Mammary epithelial cell (primary cell): ENCODE measurements at regions of chr3 and their contacts with region 1.

Region 1: DNA sequence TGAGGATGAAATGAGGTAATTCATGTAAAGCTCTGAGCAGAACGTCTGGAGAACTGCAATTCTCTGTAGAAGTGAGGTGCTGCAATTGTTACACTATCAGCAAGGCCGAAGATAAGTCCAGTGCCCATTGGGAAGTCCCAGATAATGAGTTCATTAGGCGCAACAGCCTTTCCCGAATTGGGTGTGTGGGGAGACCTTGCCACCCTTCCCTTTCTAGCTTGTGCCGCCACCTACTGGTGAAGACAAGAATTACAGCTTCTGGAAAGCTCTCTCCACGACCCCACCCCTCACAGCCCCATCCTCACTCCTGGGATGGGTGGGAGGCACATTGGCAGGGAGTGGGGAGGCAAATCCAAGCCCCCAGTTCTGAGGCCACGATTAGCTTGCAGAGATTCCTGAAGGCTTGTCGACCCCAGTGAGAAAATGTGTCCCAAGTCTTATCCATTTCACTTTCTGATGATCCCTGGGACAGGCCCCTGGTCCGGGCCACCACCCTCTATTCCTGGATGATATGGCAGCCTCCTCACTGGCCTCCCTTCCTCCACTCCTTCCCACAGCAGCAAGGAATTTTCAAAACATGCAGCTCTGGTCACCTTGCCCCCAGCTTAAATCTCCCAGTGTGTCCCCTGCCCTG is 36.4 kb downstream of the FAM3D start:
- DNase-seq: peak; percentile 43
- H3K4me3 ChIP-seq: no peak overlapping the region
- H3K27ac ChIP-seq: no peak overlapping the region
- H3K4me1 ChIP-seq: no peaks in the 10 kb centered on the region
- H3K27me3 ChIP-seq: peaks cover 2% of the 10 kb centered on the region
- CTCF ChIP-seq: peak; percentile 76 to 93

Region 2: DNA sequence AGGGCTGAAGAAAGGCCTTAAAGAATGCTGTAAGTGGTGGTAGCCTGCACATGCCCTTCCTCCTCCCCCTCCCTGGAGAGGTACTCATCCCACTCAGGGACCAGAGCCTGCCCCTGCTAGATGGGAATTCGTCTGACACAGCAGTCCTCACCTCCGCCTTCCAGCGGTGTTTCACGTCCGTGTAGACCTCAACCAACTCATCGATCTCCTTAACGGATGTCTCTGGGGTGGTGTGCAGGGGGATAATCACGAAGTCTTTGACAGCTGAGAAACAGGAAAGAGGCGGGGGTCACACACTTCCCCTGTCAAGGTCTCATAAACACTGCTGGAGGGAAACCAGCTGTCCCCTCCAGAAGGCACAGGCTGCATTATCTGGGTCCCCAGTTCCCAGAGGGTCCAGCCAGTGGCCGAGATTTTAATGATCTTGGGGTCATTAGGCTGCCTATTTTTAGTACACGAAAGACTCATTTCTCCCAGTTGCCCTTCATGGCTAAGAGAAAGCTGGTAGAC is 429.3 kb before region 1 on chr3:
- CTCF ChIA-PET with region 1: no interaction called
- dilution Hi-C with region 1: loop called (anchors 10 kb)
- in situ Hi-C with region 1: no loop called
- intact Hi-C with region 1: no loop called
- DNase-seq: no peak
- H3K4me3 ChIP-seq: no peak overlapping the region
- H3K27ac ChIP-seq: no peak overlapping the region
- H3K4me1 ChIP-seq: no peaks in the 10 kb centered on the region
- H3K27me3 ChIP-seq: no peaks in the 10 kb centered on the region
- CTCF ChIP-seq: no peak

Region 3: DNA sequence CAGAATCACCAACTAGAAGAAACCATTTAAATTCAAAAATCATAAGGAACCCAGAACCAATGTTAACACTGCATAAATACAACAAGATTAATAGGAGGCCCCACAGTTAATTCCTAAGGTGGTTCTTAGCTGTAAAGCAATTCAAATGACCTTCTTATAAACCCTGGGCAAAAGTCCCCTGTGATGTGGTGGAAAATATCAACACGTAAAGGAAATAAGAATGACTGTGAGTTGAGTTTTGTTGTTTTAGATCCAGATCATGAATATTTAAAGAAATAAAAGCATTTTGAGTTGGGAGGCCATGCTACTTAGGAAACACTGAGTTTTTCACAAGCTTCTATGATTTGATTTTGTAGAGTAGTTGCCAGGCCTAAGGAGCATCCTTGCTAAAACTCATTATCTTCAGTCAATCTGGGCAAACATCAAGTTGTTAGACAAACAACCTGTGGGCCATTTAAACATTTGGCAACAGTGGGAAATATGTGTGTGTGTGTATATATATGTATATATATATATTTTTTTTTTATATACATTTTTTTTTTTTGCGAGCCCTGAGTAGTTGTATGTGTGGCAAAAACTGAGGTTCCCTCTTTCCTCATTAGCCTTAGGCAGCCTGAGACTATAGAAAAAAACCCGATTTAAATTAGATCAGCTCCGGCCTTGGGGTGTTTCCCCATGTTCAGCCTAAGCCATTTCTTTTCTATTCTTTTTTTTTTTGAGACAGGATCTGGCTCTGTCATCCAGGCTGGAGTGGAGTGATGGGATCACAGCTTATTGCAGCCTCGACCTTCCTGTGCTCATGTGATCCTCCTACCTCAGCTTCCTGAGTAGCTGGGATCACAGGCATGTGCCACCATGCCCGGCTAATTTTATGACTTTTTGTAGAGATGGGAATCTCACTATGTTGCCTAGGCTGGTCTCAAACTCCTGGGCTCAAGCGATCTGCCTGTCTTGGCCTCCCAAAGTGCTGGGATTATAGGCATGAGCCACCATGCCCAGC is 305.5 kb before region 1 on chr3:
- CTCF ChIA-PET with region 1: no interaction called
- dilution Hi-C with region 1: no loop called
- in situ Hi-C with region 1: no loop called
- intact Hi-C with region 1: loop called (anchors 1 kb)
- DNase-seq: peak; percentile 19
- H3K4me3 ChIP-seq: no peak overlapping the region
- H3K27ac ChIP-seq: no peak overlapping the region
- H3K4me1 ChIP-seq: peaks cover 10% of the 10 kb centered on the region
- H3K27me3 ChIP-seq: no peaks in the 10 kb centered on the region
- CTCF ChIP-seq: no peak

Region 4: GRCh38 chr3:58433400-58434169 is 196.6 kb before region 1 on chr3 and contains the start of gene PDHB:
- CTCF ChIA-PET with region 1: no interaction called
- dilution Hi-C with region 1: no loop called
- in situ Hi-C with region 1: no loop called
- intact Hi-C with region 1: loop called (anchors 5 kb)
- DNase-seq: peak; percentile 86
- H3K4me3 ChIP-seq: peak within 1 kb of the TSS; percentile 84 to 96 (median 92)
- H3K27ac ChIP-seq: peak within 1 kb of the TSS; percentile 55
- H3K4me1 ChIP-seq: peaks cover 21% of the 10 kb centered on the region
- H3K27me3 ChIP-seq: no peaks in the 10 kb centered on the region
- CTCF ChIP-seq: no peak
- total RNA-seq, gene PDHB: 43.2 to 44.9 TPM

Region 5: GRCh38 chr3:58463181-58463941 is 166.8 kb before region 1 on chr3:
- CTCF ChIA-PET with region 1: no interaction called
- dilution Hi-C with region 1: no loop called
- in situ Hi-C with region 1: no loop called
- intact Hi-C with region 1: loop called (anchors 1 kb)
- DNase-seq: peak; percentile 90
- H3K4me3 ChIP-seq: no peak overlapping the region
- H3K27ac ChIP-seq: no peak overlapping the region
- H3K4me1 ChIP-seq: peaks cover 17% of the 10 kb centered on the region
- H3K27me3 ChIP-seq: peaks cover 4% of the 10 kb centered on the region
- CTCF ChIP-seq: peak; percentile 91 to 96

Region 6: DNA sequence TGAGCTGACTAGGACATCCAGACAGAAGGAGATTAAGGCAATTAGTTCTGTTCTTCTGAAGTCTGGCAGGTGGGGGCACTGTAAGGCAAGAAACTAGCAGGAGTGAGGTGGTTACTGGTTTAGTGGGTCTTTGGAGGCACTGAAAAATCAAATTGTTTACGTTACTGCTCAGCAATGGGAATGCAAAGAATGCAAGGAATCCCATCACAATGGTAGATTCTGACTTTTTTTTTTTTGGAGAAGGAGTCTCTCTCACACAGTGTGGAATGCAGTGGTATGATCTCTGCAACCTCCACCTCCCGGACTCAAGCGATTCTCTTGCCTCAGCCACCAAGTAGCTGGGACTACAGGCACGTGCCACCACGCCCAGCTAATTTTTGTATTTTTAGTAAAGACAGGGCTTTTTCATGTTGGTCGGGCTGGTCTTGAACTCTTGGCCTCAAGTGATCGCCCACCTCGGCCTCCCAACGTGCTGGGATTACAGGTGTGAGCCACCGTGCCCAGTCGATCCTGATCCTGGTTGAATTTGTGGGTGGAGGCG is 69.4 kb before region 1 on chr3:
- CTCF ChIA-PET with region 1: no interaction called
- dilution Hi-C with region 1: no loop called
- in situ Hi-C with region 1: loop called in 1 of 2 experiments (anchors 5 kb)
- intact Hi-C with region 1: loop called (anchors 1 kb)
- DNase-seq: peak; percentile 60
- H3K4me3 ChIP-seq: no peak overlapping the region
- H3K27ac ChIP-seq: no peak overlapping the region
- H3K4me1 ChIP-seq: peaks cover 21% of the 10 kb centered on the region
- H3K27me3 ChIP-seq: no peaks in the 10 kb centered on the region
- CTCF ChIP-seq: peak; percentile 23 to 29

Region 7: GRCh38 chr3:58568572-58569286 is 61.5 kb before region 1 on chr3:
- CTCF ChIA-PET with region 1: interaction called, 17 read pairs
- dilution Hi-C with region 1: no loop called
- in situ Hi-C with region 1: loop called in 1 of 2 experiments (anchors 5 kb)
- intact Hi-C with region 1: loop called (anchors 1 kb)
- DNase-seq: peak; percentile 45
- H3K4me3 ChIP-seq: no peak overlapping the region
- H3K27ac ChIP-seq: no peak overlapping the region
- H3K4me1 ChIP-seq: peaks cover 21% of the 10 kb centered on the region
- H3K27me3 ChIP-seq: no peaks in the 10 kb centered on the region
- CTCF ChIP-seq: peak; percentile 87 to 88